ENCODE measurements at regions of chr2 and their contacts with region 1.

Region 1: GRCh38 chr2:204325468-204325867 is 219.8 kb upstream of the PARD3B start:
- DNase-seq: peak; percentile 54 to 80 (median 60)
- ATAC-seq: peak; percentile 99
- H3K4me3 ChIP-seq: no peak overlapping the region
- H3K27ac ChIP-seq: peak overlapping the region; percentile 20; the same call in 1 of the 3 replicates
- H3K4me1 ChIP-seq: no peaks in the 10 kb centered on the region
- H3K27me3 ChIP-seq: no peaks in the 10 kb centered on the region
- CTCF ChIP-seq: peak; percentile 66 to 78 (median 68)
- EP300 ChIP-seq: peak; percentile 71
- POLR2A ChIP-seq: no peak
- RAD21 ChIP-seq: peak; percentile 90 to 95

Region 2: GRCh38 chr2:204434660-204435462 is 109.4 kb after region 1 on chr2:
- CTCF ChIA-PET with region 1: no interaction called
- POLR2A ChIA-PET with region 1: no interaction called
- in situ Hi-C with region 1: no loop called
- intact Hi-C with region 1: loop called (anchors 10 kb)
- DNase-seq: peak in 2 of 4 experiments; percentile 56 to 66
- ATAC-seq: peak; percentile 86
- H3K4me3 ChIP-seq: no peak overlapping the region
- H3K27ac ChIP-seq: peak overlapping the region; percentile 74
- H3K4me1 ChIP-seq: peaks cover 0 to 28% of the 10 kb centered on the region in 2 experiments; a peak in 4 of 5 replicates
- H3K27me3 ChIP-seq: no peaks in the 10 kb centered on the region
- CTCF ChIP-seq: no peak
- EP300 ChIP-seq: peak; percentile 94
- POLR2A ChIP-seq: no peak
- RAD21 ChIP-seq: 0 out of 4 replicates have a peak, but pooled peaks have one; percentile 20 to 27

Region 3: DNA sequence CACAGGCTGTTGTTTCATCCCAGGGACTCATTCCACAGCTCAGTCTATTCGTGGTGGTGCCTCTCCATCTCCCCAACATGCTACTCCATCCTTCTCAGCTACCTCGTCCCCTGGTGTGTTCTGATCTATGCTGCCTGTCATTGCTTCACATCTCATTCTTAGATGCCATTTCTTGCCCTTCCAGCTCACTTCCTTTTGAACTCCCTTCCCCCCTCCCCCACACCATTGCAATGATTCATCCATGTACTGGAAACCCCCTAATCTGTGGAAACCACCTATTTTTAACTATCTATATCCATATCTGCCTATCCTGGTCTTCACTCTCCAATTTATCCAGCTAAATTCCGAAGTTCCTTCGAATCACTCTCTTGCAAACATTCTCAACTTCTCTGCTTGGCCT is 154.1 kb after region 1 on chr2:
- CTCF ChIA-PET with region 1: no interaction called
- POLR2A ChIA-PET with region 1: no interaction called
- in situ Hi-C with region 1: no loop called
- intact Hi-C with region 1: loop called (anchors 10 kb)
- DNase-seq: no peak
- ATAC-seq: no peak
- H3K4me3 ChIP-seq: no peak overlapping the region
- H3K27ac ChIP-seq: no peak overlapping the region
- H3K4me1 ChIP-seq: peaks cover 0 to 10% of the 10 kb centered on the region in 2 experiments; a peak in 3 of 5 replicates
- H3K27me3 ChIP-seq: no peaks in the 10 kb centered on the region
- CTCF ChIP-seq: no peak
- EP300 ChIP-seq: no peak
- POLR2A ChIP-seq: no peak
- RAD21 ChIP-seq: no peak

Region 4: DNA sequence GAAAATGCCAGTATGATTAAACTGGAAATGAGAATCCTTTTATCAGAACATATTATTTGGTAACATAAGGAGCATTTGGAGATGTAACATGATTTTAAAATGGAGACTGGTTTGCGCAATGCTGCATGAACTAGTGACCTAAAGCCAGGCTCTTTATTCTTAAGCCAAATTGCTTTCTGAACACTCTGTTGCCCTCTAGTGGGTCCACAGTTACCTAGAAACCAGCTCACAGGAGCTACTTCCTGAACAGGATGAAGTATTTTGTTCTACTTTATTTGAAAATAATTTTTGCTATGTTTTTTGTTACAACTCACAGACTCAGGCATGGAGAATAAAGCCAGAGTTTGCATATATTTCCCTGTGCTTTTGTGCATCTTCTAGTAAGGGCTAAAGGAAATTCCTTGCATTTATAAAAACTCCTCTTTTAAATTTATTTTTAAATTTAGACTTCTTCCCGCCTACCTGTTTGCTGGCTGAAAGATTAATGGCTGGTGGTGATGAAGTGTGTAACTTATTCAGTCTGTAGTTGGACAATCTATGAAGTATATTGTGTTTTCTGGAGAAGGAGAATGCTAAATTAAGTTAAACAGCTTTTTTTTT is 366.5 kb after region 1 on chr2:
- CTCF ChIA-PET with region 1: interaction called, 3 read pairs
- POLR2A ChIA-PET with region 1: no interaction called
- in situ Hi-C with region 1: loop called (anchors 10 kb)
- intact Hi-C with region 1: loop called (anchors 1 kb)
- DNase-seq: peak; percentile 7 to 58 (median 18)
- ATAC-seq: peak; percentile 81
- H3K4me3 ChIP-seq: no peak overlapping the region
- H3K27ac ChIP-seq: no peak overlapping the region
- H3K4me1 ChIP-seq: no peaks in the 10 kb centered on the region
- H3K27me3 ChIP-seq: no peaks in the 10 kb centered on the region
- CTCF ChIP-seq: peak; percentile 36 to 64 (median 44); a peak in 5 of 6 replicates
- EP300 ChIP-seq: no peak
- POLR2A ChIP-seq: no peak
- RAD21 ChIP-seq: peak; percentile 75 to 81

Region 5: GRCh38 chr2:204871231-204871953 is 545.9 kb after region 1 on chr2:
- CTCF ChIA-PET with region 1: no interaction called
- POLR2A ChIA-PET with region 1: no interaction called
- in situ Hi-C with region 1: no loop called
- intact Hi-C with region 1: loop called (anchors 10 kb)
- DNase-seq: peak in 1 of 4 experiments; percentile 16
- ATAC-seq: no peak
- H3K4me3 ChIP-seq: no peak overlapping the region
- H3K27ac ChIP-seq: no peak overlapping the region
- H3K4me1 ChIP-seq: no peaks in the 10 kb centered on the region
- H3K27me3 ChIP-seq: no peaks in the 10 kb centered on the region
- CTCF ChIP-seq: peak in 1 of 3 experiments; percentile 42; a peak in 2 of 6 replicates
- EP300 ChIP-seq: no peak
- POLR2A ChIP-seq: no peak
- RAD21 ChIP-seq: peak; percentile 40 to 62; a peak in 3 of 4 replicates

Region 6: DNA sequence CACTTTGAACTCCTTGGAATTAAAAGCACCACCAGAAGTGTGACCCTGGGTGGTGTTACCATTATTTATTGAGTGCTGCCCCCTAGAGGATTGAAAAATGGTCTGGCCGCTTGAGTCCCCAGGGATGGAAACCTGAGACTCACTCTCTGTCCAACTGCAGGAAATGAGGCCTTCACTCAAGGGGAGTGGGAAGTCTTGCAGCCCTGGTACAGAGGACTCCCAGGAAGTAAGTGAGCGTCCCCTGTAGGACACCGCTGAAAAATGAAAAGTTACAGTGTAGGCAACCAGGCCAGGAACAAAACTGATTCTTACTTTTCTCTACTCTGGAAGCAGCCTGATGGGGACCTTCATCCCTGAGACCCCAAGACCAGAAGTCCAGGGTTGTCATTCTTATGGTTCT is 1354.6 kb after region 1 on chr2:
- CTCF ChIA-PET with region 1: no interaction called
- POLR2A ChIA-PET with region 1: no interaction called
- in situ Hi-C with region 1: no loop called
- intact Hi-C with region 1: loop called (anchors 10 kb)
- DNase-seq: peak; percentile 31 to 54 (median 48)
- ATAC-seq: peak; percentile 91
- H3K4me3 ChIP-seq: no peak overlapping the region
- H3K27ac ChIP-seq: no peak overlapping the region
- H3K4me1 ChIP-seq: peaks cover 0 to 12% of the 10 kb centered on the region in 2 experiments; a peak in 2 of 5 replicates
- H3K27me3 ChIP-seq: peaks cover 3 to 28% of the 10 kb centered on the region in 2 experiments; a peak in 3 of 5 replicates
- CTCF ChIP-seq: peak; percentile 49 to 56 (median 51); a peak in 5 of 6 replicates
- EP300 ChIP-seq: no peak
- POLR2A ChIP-seq: no peak
- RAD21 ChIP-seq: peak; percentile 40 to 56

Region 7: GRCh38 chr2:205947621-205948495 is 1622.4 kb after region 1 on chr2:
- CTCF ChIA-PET with region 1: no interaction called
- POLR2A ChIA-PET with region 1: no interaction called
- in situ Hi-C with region 1: loop called (anchors 25 kb)
- intact Hi-C with region 1: no loop called
- DNase-seq: peak; percentile 42 to 55 (median 50)
- ATAC-seq: peak; percentile 89
- H3K4me3 ChIP-seq: no peak overlapping the region
- H3K27ac ChIP-seq: no peak overlapping the region
- H3K4me1 ChIP-seq: no peaks in the 10 kb centered on the region; a peak in 1 of 5 replicates
- H3K27me3 ChIP-seq: peaks cover 5 to 22% of the 10 kb centered on the region in 2 experiments; a peak in 3 of 5 replicates
- CTCF ChIP-seq: peak; percentile 71 to 80 (median 80)
- EP300 ChIP-seq: no peak
- POLR2A ChIP-seq: no peak
- RAD21 ChIP-seq: peak; percentile 67 to 77

Measured in K562 (cell line).